HEK293 (cell line): ENCODE measurements at regions of chr1 and their contacts with region 1.

Region 1: GRCh38 chr1:35030756-35031446 is 844 bp downstream of the ZMYM6 start:
- H3K4me3 ChIP-seq: peak overlapping the region; percentile 87
- H3K27ac ChIP-seq: peak overlapping the region; percentile 75
- H3K4me1 ChIP-seq: no peaks in the 10 kb centered on the region
- CTCF ChIP-seq: no peak

Region 2: DNA sequence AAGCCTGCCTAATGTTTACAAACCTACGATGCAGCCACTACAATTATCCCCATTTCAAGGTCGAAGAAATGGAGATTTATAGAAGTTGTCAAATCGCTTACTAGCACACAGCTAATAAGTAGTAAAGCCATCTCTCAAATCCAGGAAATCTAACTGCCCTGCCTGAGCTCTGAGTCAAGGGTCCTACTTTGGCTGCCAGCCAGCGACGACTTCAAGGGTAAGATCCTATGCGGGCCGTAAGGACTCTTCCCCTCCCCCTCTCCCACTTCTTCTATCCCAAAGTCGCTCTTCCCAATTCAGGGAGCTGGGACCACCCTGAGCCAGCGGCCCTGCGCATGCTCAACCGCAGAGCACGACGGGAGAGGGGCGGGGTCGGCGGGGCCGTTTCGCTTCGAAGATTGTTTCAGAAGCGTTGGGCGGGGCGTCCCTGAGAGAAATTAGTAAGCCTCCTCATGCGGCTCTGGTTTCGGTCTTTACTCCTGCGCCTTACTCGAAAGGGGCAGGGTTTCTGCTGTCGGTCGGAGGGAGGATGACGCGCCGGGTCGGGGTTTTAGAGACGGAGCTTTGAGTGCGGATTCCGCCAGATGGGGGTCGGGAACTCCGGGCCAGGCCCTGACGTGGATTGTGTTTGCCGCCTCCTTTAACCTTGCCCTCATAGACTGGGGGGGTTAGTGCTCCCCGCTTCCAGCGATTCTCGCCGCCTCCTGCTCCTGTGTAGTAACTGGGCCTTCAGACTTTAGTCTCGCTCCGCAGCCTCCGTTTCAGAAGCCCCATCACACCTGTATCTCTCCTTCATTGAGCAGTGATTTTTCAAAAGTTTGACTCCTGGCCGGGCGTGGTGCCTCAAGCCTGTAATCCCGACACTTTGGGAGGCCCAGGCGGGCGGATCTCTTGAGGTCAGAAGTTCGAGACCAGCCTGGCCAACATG is 48.4 kb after region 1 on chr1 and contains the start of gene ZMYM1:
- CTCF ChIA-PET with region 1: no interaction called
- POLR2A ChIA-PET with region 1: interaction called, 25 read pairs
- H3K4me3 ChIP-seq: peak within 1 kb of the TSS; percentile 79
- H3K27ac ChIP-seq: peak within 1 kb of the TSS; percentile 89
- H3K4me1 ChIP-seq: no peaks in the 10 kb centered on the region
- CTCF ChIP-seq: no peak

Region 3: DNA sequence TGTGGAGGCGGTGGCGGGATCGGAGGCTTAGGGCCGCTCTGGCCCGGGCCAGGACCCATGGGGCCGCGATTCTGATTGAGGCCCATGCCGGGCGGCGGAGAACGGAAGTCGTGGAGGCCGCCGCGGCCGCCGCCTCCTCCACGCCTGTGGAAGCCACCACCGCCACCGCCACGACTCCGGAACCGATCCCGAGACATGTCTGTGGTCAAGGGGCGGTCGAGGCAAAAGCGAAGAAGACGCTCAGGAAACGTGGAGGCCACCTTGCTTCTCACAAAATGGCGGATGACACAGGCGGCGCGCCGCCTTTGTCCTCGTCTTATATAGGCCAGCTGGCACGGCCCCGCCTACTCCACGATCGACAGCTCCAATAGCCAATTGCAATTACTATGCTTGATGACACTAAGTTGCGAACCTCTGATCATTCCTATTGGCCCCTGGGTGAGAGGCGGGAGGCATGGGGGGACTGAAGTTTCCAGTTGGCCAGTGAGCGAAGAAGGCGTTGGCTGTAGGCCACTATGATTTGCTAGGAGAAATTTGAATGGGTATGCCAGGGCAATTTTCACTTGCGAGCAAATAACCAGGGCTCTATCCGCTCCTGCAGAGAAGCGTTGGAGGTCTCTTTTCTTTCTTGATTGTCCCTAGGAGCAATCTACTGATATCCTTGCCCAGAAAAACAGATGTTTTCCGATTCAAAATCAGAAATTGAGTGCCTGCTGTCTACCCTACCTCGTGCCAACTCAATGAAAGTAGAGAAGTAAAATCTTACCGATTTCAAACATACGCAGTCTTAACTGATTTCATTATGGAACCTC is 162.2 kb after region 1 on chr1 and contains the start of gene SFPQ:
- CTCF ChIA-PET with region 1: no interaction called
- POLR2A ChIA-PET with region 1: interaction called, 13 read pairs
- H3K4me3 ChIP-seq: peak within 1 kb of the TSS; percentile 99
- H3K27ac ChIP-seq: peak within 1 kb of the TSS; percentile 86
- H3K4me1 ChIP-seq: no peaks in the 10 kb centered on the region
- CTCF ChIP-seq: no peak